K562 (cell line): ENCODE measurements at regions of chr2 and their contacts with region 1.

Region 1: GRCh38 chr2:47323009-47323821 is 79.7 kb upstream of the MSH2 start:
- DNase-seq: peak; percentile 82 to 86 (median 84)
- ATAC-seq: peak; percentile 96
- H3K4me3 ChIP-seq: no peak overlapping the region
- H3K27ac ChIP-seq: no peak overlapping the region
- H3K4me1 ChIP-seq: peaks cover 0 to 9% of the 10 kb centered on the region in 2 experiments; a peak in 2 of 5 replicates
- H3K27me3 ChIP-seq: no peaks in the 10 kb centered on the region; a peak in 1 of 5 replicates
- CTCF ChIP-seq: peak; percentile 96 to 98 (median 98)
- EP300 ChIP-seq: no peak
- POLR2A ChIP-seq: no peak
- RAD21 ChIP-seq: peak; percentile 99

Region 2: DNA sequence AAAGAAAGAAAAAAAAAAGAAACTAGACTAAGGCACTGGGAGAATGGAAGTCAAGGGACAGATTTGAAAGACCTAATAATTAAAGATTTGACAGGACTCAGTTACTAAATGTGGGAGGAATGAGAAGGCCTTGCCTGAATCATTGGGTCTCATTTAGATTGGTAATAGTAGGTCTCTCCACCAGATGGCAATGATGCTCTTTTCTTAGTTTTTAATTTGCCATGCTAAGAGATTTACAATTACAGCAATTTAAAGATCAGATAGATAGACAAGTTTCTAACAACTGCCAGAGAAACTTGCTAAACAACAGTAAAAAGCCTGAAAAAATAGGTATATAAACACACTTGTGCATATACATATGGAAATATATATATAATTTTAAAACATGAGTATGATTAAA is 690.9 kb before region 1 on chr2:
- CTCF ChIA-PET with region 1: no interaction called
- POLR2A ChIA-PET with region 1: no interaction called
- in situ Hi-C with region 1: no loop called
- intact Hi-C with region 1: loop called (anchors 5 kb)
- DNase-seq: peak; percentile 14 to 23 (median 18)
- ATAC-seq: peak; percentile 64; the same call in 2 of the 3 replicates
- H3K4me3 ChIP-seq: no peak overlapping the region
- H3K27ac ChIP-seq: no peak overlapping the region
- H3K4me1 ChIP-seq: no peaks in the 10 kb centered on the region
- H3K27me3 ChIP-seq: no peaks in the 10 kb centered on the region
- CTCF ChIP-seq: peak; percentile 33 to 50 (median 35); a peak in 3 of 6 replicates
- EP300 ChIP-seq: no peak
- POLR2A ChIP-seq: no peak
- RAD21 ChIP-seq: peak; percentile 47 to 66

Region 3: DNA sequence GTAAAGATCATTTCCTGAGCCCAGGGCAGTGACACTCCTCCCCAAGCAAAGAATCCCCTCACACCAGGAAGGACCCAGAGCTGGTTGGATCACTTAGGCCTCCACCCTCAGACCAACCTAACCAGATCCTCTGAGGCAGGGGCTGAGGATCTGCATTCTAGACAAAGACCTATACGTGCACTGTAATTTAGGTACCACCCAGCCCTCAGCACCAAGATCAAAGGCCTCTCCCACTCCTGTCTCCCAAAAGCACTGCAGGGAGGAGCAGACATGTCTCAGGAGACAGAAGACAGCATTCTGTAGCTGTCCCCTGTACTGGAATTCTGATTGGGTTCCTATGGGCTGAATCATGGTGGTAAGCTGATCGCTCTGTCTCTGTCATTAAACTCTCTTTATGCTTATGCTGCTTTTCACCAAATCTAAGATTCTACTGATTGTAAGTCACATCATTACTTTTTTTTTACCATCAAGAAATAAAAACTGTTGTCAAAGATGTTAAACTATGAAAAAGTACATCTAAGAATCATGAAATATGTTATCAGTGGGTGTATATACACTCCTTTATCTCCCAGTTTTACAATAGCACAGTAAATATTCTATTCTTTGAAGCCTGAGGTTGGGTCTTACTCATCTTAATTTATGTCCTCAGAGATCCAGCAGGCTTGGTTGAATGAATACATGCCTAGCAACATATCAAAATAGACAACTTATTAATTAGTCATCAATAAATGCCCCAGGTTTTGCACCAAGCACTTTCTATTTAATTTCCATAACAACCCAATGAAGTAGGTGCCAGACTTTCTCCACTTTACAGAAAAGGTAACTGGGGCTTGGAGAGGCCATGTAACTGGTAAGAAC is 436.0 kb before region 1 on chr2:
- CTCF ChIA-PET with region 1: no interaction called
- POLR2A ChIA-PET with region 1: no interaction called
- in situ Hi-C with region 1: no loop called
- intact Hi-C with region 1: loop called (anchors 5 kb)
- DNase-seq: no peak
- ATAC-seq: no peak
- H3K4me3 ChIP-seq: no peak overlapping the region
- H3K27ac ChIP-seq: no peak overlapping the region
- H3K4me1 ChIP-seq: no peaks in the 10 kb centered on the region
- H3K27me3 ChIP-seq: peaks cover 14 to 36% of the 10 kb centered on the region in 2 experiments
- CTCF ChIP-seq: no peak
- EP300 ChIP-seq: no peak
- POLR2A ChIP-seq: no peak
- RAD21 ChIP-seq: no peak

Region 4: GRCh38 chr2:46989491-46990230 is 333.6 kb before region 1 on chr2:
- CTCF ChIA-PET with region 1: no interaction called
- POLR2A ChIA-PET with region 1: interaction called, 3 read pairs
- in situ Hi-C with region 1: loop called (anchors 5 kb)
- intact Hi-C with region 1: no loop called
- DNase-seq: no peak
- ATAC-seq: no peak
- H3K4me3 ChIP-seq: no peak overlapping the region
- H3K27ac ChIP-seq: no peak overlapping the region
- H3K4me1 ChIP-seq: peaks cover 16 to 22% of the 10 kb centered on the region in 2 experiments
- H3K27me3 ChIP-seq: no peaks in the 10 kb centered on the region
- CTCF ChIP-seq: no peak
- EP300 ChIP-seq: no peak
- POLR2A ChIP-seq: no peak
- RAD21 ChIP-seq: no peak

Region 5: DNA sequence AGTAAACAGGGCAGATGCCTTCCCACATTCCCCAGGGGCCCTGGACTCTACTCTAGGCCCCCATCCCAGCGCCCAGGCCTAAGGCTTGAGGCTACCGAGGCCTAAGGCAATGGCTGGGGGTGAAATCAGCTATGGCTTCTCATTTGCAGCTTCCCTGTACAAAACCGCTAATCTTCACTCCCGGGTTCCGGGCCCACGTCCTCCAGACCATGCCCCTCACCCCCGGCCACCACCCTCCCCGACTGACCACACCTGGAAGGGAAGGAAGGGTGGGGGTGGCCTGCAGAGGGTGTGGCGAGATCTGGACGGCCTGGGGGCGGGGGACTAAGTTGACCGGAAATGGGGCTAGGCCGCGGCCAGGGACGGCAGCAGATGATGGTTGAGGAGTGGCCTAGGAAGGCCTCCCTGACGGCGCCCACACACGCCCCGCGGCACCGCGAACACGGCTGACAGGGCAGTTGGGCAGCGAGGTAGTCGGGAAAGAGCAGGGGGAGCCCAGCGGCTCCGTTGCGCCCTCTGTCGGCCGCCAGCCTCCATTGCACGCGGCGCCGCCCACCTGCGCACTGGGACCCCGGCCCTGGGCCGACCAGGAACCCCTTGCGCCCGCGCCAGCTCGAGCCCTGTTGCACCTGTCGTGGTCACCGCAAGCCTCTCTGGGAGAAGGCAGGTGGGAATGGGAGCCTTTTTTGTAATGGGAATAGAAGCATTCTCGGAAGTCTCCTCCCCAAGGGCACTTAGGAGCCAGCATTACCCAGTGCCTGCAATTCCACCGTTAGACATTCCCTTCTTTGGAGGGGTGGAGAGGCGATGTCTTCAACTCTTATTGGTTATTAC is 51.0 kb before region 1 on chr2:
- CTCF ChIA-PET with region 1: no interaction called
- POLR2A ChIA-PET with region 1: no interaction called
- in situ Hi-C with region 1: no loop called
- intact Hi-C with region 1: loop called (anchors 5 kb)
- DNase-seq: peak; percentile 83 to 94 (median 91)
- ATAC-seq: peak; percentile 94
- H3K4me3 ChIP-seq: peak overlapping the region; percentile 45
- H3K27ac ChIP-seq: peak overlapping the region; percentile 69
- H3K4me1 ChIP-seq: peaks cover 20 to 27% of the 10 kb centered on the region in 2 experiments
- H3K27me3 ChIP-seq: 0 out of 5 replicates have a peak, but pooled peaks cover 0 to under 1% of the 10 kb centered on the region in 2 experiments
- CTCF ChIP-seq: peak; percentile 83 to 95 (median 92)
- EP300 ChIP-seq: no peak
- POLR2A ChIP-seq: 0 out of 2 replicates have a peak, but pooled peaks have one; percentile 54
- RAD21 ChIP-seq: peak; percentile 90 to 92